ENCODE measurements at regions of chr5 and their contacts with region 1.

Region 1: DNA sequence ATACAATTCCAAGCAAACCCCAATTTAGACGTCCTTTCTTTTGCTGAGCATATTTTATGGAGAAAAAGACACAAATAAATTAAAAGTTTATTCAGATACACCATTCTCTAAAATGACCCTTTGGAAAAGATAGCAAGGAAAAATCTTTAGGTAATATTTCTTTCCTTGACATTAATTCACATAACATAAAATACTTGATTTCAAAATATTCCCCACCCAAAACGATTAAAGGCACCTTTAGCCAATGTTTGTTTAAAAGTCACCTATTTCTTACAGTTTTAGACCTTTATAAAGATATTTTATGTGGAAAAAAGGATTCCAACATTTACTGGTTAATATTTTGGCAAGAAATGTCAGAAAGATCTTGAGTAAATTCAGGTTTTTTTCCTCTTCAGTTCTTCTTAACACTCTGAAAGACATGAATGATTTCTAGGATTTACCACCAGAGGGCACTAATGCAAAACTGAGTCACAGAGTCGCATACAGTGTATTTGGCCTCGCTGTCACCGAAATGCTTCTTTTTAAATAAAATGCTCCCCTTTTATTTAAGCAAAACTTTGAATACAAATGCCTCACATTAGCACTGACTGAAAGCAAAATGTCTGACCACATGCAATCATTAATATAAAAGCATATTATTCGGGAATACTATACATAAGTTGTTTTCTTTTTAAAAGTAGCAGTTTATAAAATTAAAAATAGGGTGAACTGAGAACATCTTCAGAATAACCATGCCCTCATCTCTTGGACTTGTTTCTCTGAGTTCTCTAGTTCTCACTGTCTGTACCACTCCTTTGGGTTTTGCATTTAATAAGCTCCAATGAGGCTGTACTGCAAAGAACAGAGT is 122.5 kb downstream of the SLC1A3 start:
- DNase-seq: no peak
- ATAC-seq: 0 out of 3 replicates have a peak, but pooled peaks have one; percentile 11
- H3K4me3 ChIP-seq: no peak overlapping the region
- H3K27ac ChIP-seq: no peak overlapping the region
- H3K4me1 ChIP-seq: peaks cover 12% of the 10 kb centered on the region
- H3K27me3 ChIP-seq: no peaks in the 10 kb centered on the region
- CTCF ChIP-seq: peak; percentile 61 to 67 (median 65)
- EP300 ChIP-seq: no peak
- POLR2A ChIP-seq: no peak
- RAD21 ChIP-seq: peak; percentile 48

Region 2: GRCh38 chr5:36690041-36690961 is 38.6 kb before region 1 on chr5:
- CTCF ChIA-PET with region 1: interaction called, 202 read pairs
- POLR2A ChIA-PET with region 1: interaction called, 18 read pairs
- RAD21 ChIA-PET with region 1: interaction called, 30 read pairs
- SMC1A ChIA-PET with region 1: interaction called, 176 read pairs
- in situ Hi-C with region 1: no loop called
- intact Hi-C with region 1: loop called (anchors 2 kb)
- DNase-seq: peak; percentile 42
- ATAC-seq: peak; percentile 84
- H3K4me3 ChIP-seq: peak overlapping the region; percentile 83
- H3K27ac ChIP-seq: peak overlapping the region; percentile 55
- H3K4me1 ChIP-seq: peaks cover 19% of the 10 kb centered on the region
- H3K27me3 ChIP-seq: no peaks in the 10 kb centered on the region
- CTCF ChIP-seq: peak; percentile 89 to 95 (median 90)
- EP300 ChIP-seq: no peak
- POLR2A ChIP-seq: peak; percentile 68
- RAD21 ChIP-seq: peak; percentile 53

Region 3: GRCh38 chr5:36701085-36701698 is 27.7 kb before region 1 on chr5:
- CTCF ChIA-PET with region 1: interaction called, 202 read pairs
- POLR2A ChIA-PET with region 1: interaction called, 33 read pairs
- RAD21 ChIA-PET with region 1: interaction called, 65 read pairs
- SMC1A ChIA-PET with region 1: interaction called, 176 read pairs
- in situ Hi-C with region 1: no loop called
- intact Hi-C with region 1: no loop called
- DNase-seq: peak; percentile 55
- ATAC-seq: peak; percentile 98
- H3K4me3 ChIP-seq: no peak overlapping the region
- H3K27ac ChIP-seq: peak overlapping the region; percentile 46
- H3K4me1 ChIP-seq: peaks cover 23% of the 10 kb centered on the region
- H3K27me3 ChIP-seq: no peaks in the 10 kb centered on the region
- CTCF ChIP-seq: no peak
- EP300 ChIP-seq: peak in 1 of 2 experiments; percentile 58; a peak in 2 of 4 replicates
- POLR2A ChIP-seq: no peak
- RAD21 ChIP-seq: no peak

Region 4: GRCh38 chr5:36717131-36717695 is 11.7 kb before region 1 on chr5:
- CTCF ChIA-PET with region 1: interaction called, 16 read pairs
- POLR2A ChIA-PET with region 1: interaction called, 4 read pairs
- RAD21 ChIA-PET with region 1: interaction called, 18 read pairs
- SMC1A ChIA-PET with region 1: interaction called, 17 read pairs
- in situ Hi-C with region 1: no loop called
- intact Hi-C with region 1: no loop called
- DNase-seq: no peak
- ATAC-seq: no peak
- H3K4me3 ChIP-seq: no peak overlapping the region
- H3K27ac ChIP-seq: no peak overlapping the region
- H3K4me1 ChIP-seq: peaks cover 29% of the 10 kb centered on the region
- H3K27me3 ChIP-seq: no peaks in the 10 kb centered on the region
- CTCF ChIP-seq: no peak
- EP300 ChIP-seq: no peak
- POLR2A ChIP-seq: no peak
- RAD21 ChIP-seq: no peak

Region 5: DNA sequence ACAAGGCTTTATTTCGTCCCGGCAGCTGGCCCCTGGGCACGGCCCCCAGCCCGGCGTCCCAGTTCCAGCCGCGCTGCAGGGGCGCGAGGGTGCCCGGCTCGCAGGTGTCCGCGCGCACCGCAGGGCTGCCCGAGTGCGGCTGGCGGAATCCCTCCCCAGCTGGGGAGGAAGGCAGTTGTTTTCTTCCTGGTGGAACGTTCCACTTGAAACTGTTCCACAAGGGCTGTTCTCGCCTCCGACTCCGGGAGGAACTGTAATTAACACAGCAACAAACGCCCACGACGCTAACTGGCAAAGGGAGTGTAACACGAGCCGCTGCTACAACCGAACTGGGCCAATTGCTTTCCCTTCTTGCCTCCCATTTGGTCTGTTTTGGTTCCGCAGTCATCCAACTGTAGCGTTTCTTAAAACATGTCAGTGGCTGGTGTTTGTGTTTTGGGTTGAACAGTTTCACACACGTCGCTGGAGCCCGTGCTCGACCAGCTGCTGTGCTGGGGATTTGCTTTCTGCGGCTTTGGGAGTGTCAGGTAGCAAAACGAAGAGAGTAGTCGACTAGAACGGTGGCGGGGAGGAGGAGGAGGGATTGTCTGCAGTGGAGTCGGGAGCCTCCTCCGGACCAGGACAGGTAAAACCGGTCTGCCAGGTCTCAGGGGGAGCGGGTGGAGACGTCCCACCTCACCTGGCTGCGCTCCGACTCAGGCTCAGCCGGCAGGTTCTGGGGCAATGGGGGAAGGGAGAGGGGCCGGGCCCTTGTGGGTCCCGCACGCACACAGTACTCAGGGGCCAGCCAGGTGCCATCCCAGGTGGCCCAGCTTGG is 16.1 kb after region 1 on chr5:
- CTCF ChIA-PET with region 1: interaction called, 63 read pairs
- POLR2A ChIA-PET with region 1: no interaction called
- RAD21 ChIA-PET with region 1: interaction called, 10 read pairs
- SMC1A ChIA-PET with region 1: interaction called, 14 read pairs
- in situ Hi-C with region 1: no loop called
- intact Hi-C with region 1: no loop called
- DNase-seq: no peak
- ATAC-seq: peak; percentile 83
- H3K4me3 ChIP-seq: peak overlapping the region; percentile 59
- H3K27ac ChIP-seq: no peak overlapping the region
- H3K4me1 ChIP-seq: peaks cover 5% of the 10 kb centered on the region; the same call in 1 of the 2 replicates
- H3K27me3 ChIP-seq: peaks cover 0 to 3% of the 10 kb centered on the region in 2 experiments; a peak in 1 of 4 replicates
- CTCF ChIP-seq: no peak
- EP300 ChIP-seq: no peak
- POLR2A ChIP-seq: no peak
- RAD21 ChIP-seq: peak; percentile 53; the same call in 1 of the 2 replicates

Region 6: GRCh38 chr5:36875790-36876388 is 147.0 kb after region 1 on chr5:
- CTCF ChIA-PET with region 1: interaction called, 29 read pairs
- POLR2A ChIA-PET with region 1: interaction called, 24 read pairs
- RAD21 ChIA-PET with region 1: interaction called, 18 read pairs
- SMC1A ChIA-PET with region 1: interaction called, 30 read pairs
- in situ Hi-C with region 1: no loop called
- intact Hi-C with region 1: loop called (anchors 5 kb)
- DNase-seq: peak; percentile 46
- ATAC-seq: peak; percentile 71
- H3K4me3 ChIP-seq: peak overlapping the region; percentile 95
- H3K27ac ChIP-seq: peak overlapping the region; percentile 85
- H3K4me1 ChIP-seq: peaks cover 7% of the 10 kb centered on the region; the same call in 1 of the 2 replicates
- H3K27me3 ChIP-seq: no peaks in the 10 kb centered on the region
- CTCF ChIP-seq: peak; percentile 49 to 65 (median 61)
- EP300 ChIP-seq: no peak
- POLR2A ChIP-seq: no peak
- RAD21 ChIP-seq: peak; percentile 52

Region 7: DNA sequence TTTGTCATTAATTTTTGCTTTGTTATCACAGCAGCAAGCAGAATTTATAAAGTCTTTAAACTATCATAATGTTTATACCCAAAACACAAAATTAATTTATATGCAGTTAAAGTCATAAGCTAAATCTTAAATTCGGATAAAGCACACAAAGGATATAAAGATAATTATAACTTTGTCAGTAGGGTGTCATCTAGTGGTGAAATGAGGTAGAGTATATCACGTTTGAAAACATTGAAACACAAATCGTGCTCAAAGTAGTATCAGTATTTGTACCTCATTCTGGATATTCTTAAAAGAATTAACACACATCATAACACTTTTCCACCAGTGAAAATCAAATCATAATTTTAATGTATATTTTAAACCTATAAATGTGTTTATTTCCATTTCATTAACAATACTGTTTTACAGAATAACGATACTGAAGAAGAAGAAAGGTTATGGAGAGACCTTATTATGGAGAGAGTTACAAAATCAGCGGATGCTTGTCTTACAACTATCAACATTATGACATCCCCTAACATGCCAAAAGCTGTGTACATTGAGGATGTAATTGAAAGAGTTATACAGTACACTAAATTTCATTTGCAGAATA is 277.1 kb after region 1 on chr5:
- CTCF ChIA-PET with region 1: interaction called, 18 read pairs
- POLR2A ChIA-PET with region 1: interaction called, 3 read pairs
- RAD21 ChIA-PET with region 1: interaction called, 5 read pairs
- SMC1A ChIA-PET with region 1: interaction called, 5 read pairs
- in situ Hi-C with region 1: no loop called
- intact Hi-C with region 1: loop called (anchors 2 kb)
- DNase-seq: no peak
- ATAC-seq: peak; percentile 66
- H3K4me3 ChIP-seq: no peak overlapping the region
- H3K27ac ChIP-seq: no peak overlapping the region
- H3K4me1 ChIP-seq: no peaks in the 10 kb centered on the region
- H3K27me3 ChIP-seq: no peaks in the 10 kb centered on the region
- CTCF ChIP-seq: peak; percentile 42 to 57 (median 56); a peak in 4 of 6 replicates
- EP300 ChIP-seq: no peak
- POLR2A ChIP-seq: no peak
- RAD21 ChIP-seq: peak; percentile 52; the same call in 1 of the 2 replicates